Activated CD4-positive, alpha-beta T cell treated with anti-CD3 and anti-CD28 coated beads, Interleukin-2, amount 10 ng/mL, durations not matched to agents 24 days and 14 days (primary cell): ENCODE measurements at regions of chr6 and their contacts with region 1.

Region 1: DNA sequence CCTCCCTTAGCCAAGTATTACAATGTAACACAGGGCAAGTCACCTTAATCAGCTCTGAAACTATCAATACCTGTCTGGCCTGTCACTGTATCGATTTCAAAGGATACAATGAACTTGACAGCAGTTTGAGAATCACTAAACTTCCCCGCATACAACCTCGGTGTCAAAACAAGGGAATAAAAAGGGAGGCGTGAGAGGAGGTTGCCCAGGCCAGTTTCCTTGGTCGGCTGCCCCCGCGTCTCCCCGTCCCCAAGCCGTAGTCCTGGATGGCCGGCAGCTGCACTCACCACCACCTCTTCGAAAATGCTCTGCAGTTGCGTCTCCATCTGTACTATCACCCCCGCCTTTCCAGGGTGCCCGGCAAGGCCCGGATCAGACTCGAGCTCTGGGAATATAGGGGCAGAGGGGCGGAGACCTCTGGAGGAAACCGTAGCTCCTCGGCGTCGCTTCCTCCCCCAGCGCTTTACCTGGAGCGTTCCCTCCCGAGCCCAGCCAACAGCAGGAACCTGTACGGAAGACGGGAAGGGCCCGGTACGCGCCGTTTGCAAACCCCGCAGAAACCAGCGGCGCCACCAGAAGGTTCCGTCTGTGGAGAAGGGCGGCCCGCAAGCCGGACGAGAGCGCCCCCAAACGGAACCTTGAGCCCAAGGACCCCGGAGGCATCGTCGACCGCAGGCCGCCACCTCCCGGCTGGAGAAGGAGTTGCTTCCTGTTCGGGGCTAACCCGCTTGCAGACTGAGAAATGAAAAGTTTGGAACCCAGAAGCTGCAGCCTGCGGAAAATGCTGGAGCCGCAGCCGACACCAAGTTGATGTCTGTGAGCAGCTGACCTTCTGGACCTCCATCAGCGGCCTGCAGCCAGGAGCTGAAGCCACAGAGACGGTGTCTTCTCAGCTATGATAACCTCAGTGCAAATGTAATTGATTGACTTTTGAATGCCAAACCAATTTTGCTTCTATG is at the start of gene MED23:
- DNase-seq: peak; percentile 99
- H3K4me3 Mint-ChIP-seq: peak within 1 kb of the TSS; percentile 97
- H3K27ac Mint-ChIP-seq: peak within 1 kb of the TSS; percentile 92
- H3K4me1 Mint-ChIP-seq: peaks cover 22% of the 10 kb centered on the region
- H3K27me3 Mint-ChIP-seq: no peaks in the 10 kb centered on the region
- total RNA-seq, gene MED23: 29.2 and 30.2 TPM in 2 replicates

Region 2: GRCh38 chr6:130885392-130886192 is 742.4 kb before region 1 on chr6:
- intact Hi-C with region 1: loop called (anchors 1 kb)
- DNase-seq: peak; percentile 92
- H3K4me3 Mint-ChIP-seq: no peak overlapping the region
- H3K27ac Mint-ChIP-seq: no peak overlapping the region
- H3K4me1 Mint-ChIP-seq: no peaks in the 10 kb centered on the region
- H3K27me3 Mint-ChIP-seq: no peaks in the 10 kb centered on the region

Region 3: GRCh38 chr6:131063028-131063763 is 564.8 kb before region 1 on chr6 and contains the start of gene EPB41L2:
- intact Hi-C with region 1: loop called (anchors 2 kb)
- DNase-seq: peak; percentile 94
- H3K4me3 Mint-ChIP-seq: peak within 1 kb of the TSS; percentile 86
- H3K27ac Mint-ChIP-seq: peak within 1 kb of the TSS; percentile 35
- H3K4me1 Mint-ChIP-seq: peaks cover 15% of the 10 kb centered on the region
- H3K27me3 Mint-ChIP-seq: peaks cover 21% of the 10 kb centered on the region
- total RNA-seq, gene EPB41L2: 15.4 and 16.5 TPM in 2 replicates

Region 4: GRCh38 chr6:131199568-131200272 is 428.3 kb before region 1 on chr6:
- intact Hi-C with region 1: loop called (anchors 1 kb)
- DNase-seq: peak; percentile 93
- H3K4me3 Mint-ChIP-seq: peak overlapping the region; percentile 81
- H3K27ac Mint-ChIP-seq: peak overlapping the region; percentile 95
- H3K4me1 Mint-ChIP-seq: peaks cover 45% of the 10 kb centered on the region
- H3K27me3 Mint-ChIP-seq: no peaks in the 10 kb centered on the region

Region 5: DNA sequence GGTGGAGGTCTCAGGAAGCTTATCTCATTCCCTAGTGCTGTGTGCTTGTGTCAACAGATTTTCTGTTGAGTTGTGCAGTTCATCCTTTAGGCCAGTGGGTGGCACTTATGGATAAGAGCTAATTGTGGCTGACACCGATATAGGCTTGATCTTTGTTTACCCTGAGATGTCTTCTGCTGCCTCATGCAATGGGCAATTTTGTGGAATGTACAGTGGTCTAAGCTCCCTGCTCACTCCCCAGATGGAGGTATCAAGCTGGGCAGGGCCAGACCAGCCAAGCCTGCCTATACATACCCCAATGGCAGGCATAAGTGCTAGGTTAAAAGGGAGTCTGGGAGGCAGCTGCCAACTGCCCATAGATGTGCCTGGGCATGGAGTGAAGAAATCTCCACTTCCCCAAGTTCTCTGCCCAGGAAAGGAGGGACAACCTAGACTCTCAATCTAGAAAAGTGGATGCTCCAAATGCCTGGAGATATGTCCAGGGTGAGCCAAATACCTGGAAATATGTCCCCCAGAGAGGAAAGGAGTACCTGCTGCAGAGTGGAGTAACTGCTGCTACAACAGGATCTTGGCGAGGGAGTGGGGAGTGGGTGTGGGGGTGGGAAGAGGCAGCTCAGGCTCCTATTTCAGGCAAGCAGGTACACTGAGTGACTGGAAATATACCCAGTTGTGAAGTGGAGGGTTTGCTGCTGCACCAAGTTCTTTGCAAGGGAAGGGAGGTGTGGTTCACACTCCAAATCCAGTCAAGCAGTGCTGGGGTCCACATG is 108.2 kb before region 1 on chr6:
- intact Hi-C with region 1: loop called (anchors 1 kb)
- DNase-seq: peak; percentile 83
- H3K4me3 Mint-ChIP-seq: no peak overlapping the region
- H3K27ac Mint-ChIP-seq: no peak overlapping the region
- H3K4me1 Mint-ChIP-seq: peaks cover 13% of the 10 kb centered on the region
- H3K27me3 Mint-ChIP-seq: peaks cover 2% of the 10 kb centered on the region

Region 6: DNA sequence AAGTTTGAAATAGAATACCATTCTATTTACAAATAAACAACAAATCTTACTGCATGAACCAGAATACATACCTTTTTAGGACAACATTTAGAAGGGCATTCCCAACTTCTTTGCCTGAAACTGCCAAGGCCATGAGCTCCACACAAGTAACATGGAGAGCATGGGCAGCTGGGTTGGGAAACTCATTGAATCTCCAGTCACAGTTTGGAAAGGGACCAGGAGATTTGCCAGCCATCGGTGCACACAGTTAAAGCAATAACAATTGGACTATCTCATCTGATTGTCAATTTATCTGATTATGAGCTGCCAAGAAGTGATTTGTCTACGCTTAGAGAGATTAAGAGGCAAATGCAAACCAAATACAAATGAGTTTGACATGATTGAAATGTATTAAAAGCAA is 35.1 kb before region 1 on chr6:
- intact Hi-C with region 1: loop called (anchors 5 kb)
- DNase-seq: no peak
- H3K4me3 Mint-ChIP-seq: no peak overlapping the region
- H3K27ac Mint-ChIP-seq: no peak overlapping the region
- H3K4me1 Mint-ChIP-seq: peaks cover 2% of the 10 kb centered on the region
- H3K27me3 Mint-ChIP-seq: no peaks in the 10 kb centered on the region